Activated CD8-positive, alpha-beta T cell treated with anti-CD3 and anti-CD28 coated beads for 36 hours (primary cell): ENCODE measurements at regions of chr11 and their contacts with region 1.

Region 1: DNA sequence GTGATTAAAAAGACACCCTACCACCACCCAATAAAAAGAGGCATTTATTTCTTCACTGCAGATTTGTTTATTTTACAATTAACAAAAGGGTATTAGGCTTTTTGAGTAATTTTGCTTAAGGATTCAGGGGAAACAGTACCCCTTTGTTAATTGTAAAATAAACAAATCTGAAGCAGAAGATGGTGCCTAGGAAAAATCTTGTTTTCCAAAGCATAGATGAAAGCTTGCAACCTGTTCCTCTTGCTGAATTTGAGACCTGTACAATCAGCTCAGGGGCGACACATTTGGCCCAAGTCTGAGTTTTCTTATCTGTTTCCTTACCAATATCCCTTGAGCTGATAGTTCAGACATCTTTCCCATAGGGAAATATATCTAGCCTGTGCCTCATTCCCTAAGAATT is 171.9 kb downstream of the GRIA4 start:
- DNase-seq: no peak
- ATAC-seq: no peak
- H3K4me3 Mint-ChIP-seq: no peak overlapping the region
- H3K27ac Mint-ChIP-seq: no peak overlapping the region
- H3K4me1 Mint-ChIP-seq: no peaks in the 10 kb centered on the region
- H3K27me3 Mint-ChIP-seq: no peaks in the 10 kb centered on the region
- CTCF ChIP-seq: no peak

Region 2: GRCh38 chr11:105754260-105754659 is 27.5 kb before region 1 on chr11:
- CTCF ChIA-PET with region 1: no interaction called
- POLR2A ChIA-PET with region 1: no interaction called
- intact Hi-C with region 1: loop called (anchors 2 kb)
- DNase-seq: no peak
- ATAC-seq: no peak
- H3K4me3 Mint-ChIP-seq: no peak overlapping the region
- H3K27ac Mint-ChIP-seq: no peak overlapping the region
- H3K4me1 Mint-ChIP-seq: no peaks in the 10 kb centered on the region
- H3K27me3 Mint-ChIP-seq: no peaks in the 10 kb centered on the region
- CTCF ChIP-seq: no peak

Region 3: GRCh38 chr11:105829084-105829483 is 47.3 kb after region 1 on chr11:
- CTCF ChIA-PET with region 1: no interaction called
- POLR2A ChIA-PET with region 1: no interaction called
- intact Hi-C with region 1: no loop called
- DNase-seq: no peak
- ATAC-seq: no peak
- H3K4me3 Mint-ChIP-seq: no peak overlapping the region
- H3K27ac Mint-ChIP-seq: no peak overlapping the region
- H3K4me1 Mint-ChIP-seq: no peaks in the 10 kb centered on the region
- H3K27me3 Mint-ChIP-seq: no peaks in the 10 kb centered on the region
- CTCF ChIP-seq: no peak

Region 4: GRCh38 chr11:106001304-106002012 is 219.7 kb after region 1 on chr11:
- CTCF ChIA-PET with region 1: no interaction called
- POLR2A ChIA-PET with region 1: no interaction called
- intact Hi-C with region 1: no loop called
- DNase-seq: no peak
- ATAC-seq: no peak
- H3K4me3 Mint-ChIP-seq: no peak overlapping the region
- H3K27ac Mint-ChIP-seq: no peak overlapping the region
- H3K4me1 Mint-ChIP-seq: peaks cover 6% of the 10 kb centered on the region
- H3K27me3 Mint-ChIP-seq: no peaks in the 10 kb centered on the region
- CTCF ChIP-seq: no peak